ENCODE measurements at regions of chr17 and their contacts with region 1.

Region 1: GRCh38 chr17:50471009-50471905 is 2.6 kb upstream of the CHAD start:
- DNase-seq: no peak
- H3K4me3 ChIP-seq: no peak overlapping the region
- H3K27ac ChIP-seq: no peak overlapping the region
- H3K4me1 ChIP-seq: peaks cover 21% of the 10 kb centered on the region
- H3K27me3 ChIP-seq: peaks cover 4% of the 10 kb centered on the region
- CTCF ChIP-seq: no peak

Region 2: GRCh38 chr17:50593321-50593720 is 122.1 kb after region 1 on chr17:
- CTCF ChIA-PET with region 1: no interaction called
- dilution Hi-C with region 1: loop called (anchors 5 kb)
- in situ Hi-C with region 1: no loop called
- intact Hi-C with region 1: no loop called
- DNase-seq: no peak
- H3K4me3 ChIP-seq: no peak overlapping the region
- H3K27ac ChIP-seq: no peak overlapping the region
- H3K4me1 ChIP-seq: no peaks in the 10 kb centered on the region
- H3K27me3 ChIP-seq: no peaks in the 10 kb centered on the region
- CTCF ChIP-seq: no peak